ENCODE measurements at regions of chr3 and their contacts with region 1.

Region 1: GRCh38 chr3:155110976-155111901 is 31.1 kb downstream of the MME start:
- DNase-seq: peak; percentile 88
- H3K4me3 ChIP-seq: peak overlapping the region; percentile 63
- H3K27ac ChIP-seq: peak overlapping the region; percentile 98
- H3K4me1 ChIP-seq: peaks cover 96% of the 10 kb centered on the region
- CTCF ChIP-seq: no peak

Region 2: GRCh38 chr3:155093261-155093660 is 18.0 kb before region 1 on chr3:
- CTCF ChIA-PET with region 1: no interaction called
- POLR2A ChIA-PET with region 1: interaction called, 13 read pairs
- intact Hi-C with region 1: no loop called
- DNase-seq: peak; percentile 79
- H3K4me3 ChIP-seq: peak overlapping the region; percentile 2
- H3K27ac ChIP-seq: peak overlapping the region; percentile 76
- H3K4me1 ChIP-seq: peaks cover 68% of the 10 kb centered on the region
- CTCF ChIP-seq: no peak

Region 3: DNA sequence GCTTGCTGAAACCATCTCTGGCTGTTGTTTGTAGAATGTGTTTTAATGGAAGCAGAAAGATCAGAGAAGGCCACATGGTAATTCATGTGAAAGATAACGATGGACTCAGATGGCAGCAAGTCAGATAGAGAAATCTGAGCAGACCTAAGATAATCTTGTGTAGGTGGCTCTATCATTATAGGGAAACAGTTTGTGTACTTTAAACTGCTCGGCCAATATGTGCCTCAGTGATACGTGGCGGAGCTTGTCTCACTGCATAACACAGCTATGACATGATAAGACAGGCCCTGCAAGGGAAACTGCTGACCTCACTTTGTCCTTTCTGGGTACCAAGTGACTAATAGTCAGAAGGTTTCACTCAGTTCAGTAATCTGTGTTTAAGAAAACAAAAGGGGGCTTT is 19.9 kb after region 1 on chr3:
- CTCF ChIA-PET with region 1: no interaction called
- POLR2A ChIA-PET with region 1: interaction called, 11 read pairs
- intact Hi-C with region 1: no loop called
- DNase-seq: no peak
- H3K4me3 ChIP-seq: no peak overlapping the region
- H3K27ac ChIP-seq: no peak overlapping the region
- H3K4me1 ChIP-seq: peaks cover 40% of the 10 kb centered on the region
- CTCF ChIP-seq: no peak

Region 4: GRCh38 chr3:155870133-155870944 is 759.1 kb after region 1 on chr3 and contains the start of gene GMPS:
- CTCF ChIA-PET with region 1: no interaction called
- POLR2A ChIA-PET with region 1: no interaction called
- intact Hi-C with region 1: loop called (anchors 5 kb)
- DNase-seq: peak; percentile 95
- H3K4me3 ChIP-seq: peak within 1 kb of the TSS; percentile 88
- H3K27ac ChIP-seq: peak within 1 kb of the TSS; percentile 81
- H3K4me1 ChIP-seq: peaks cover 23% of the 10 kb centered on the region
- CTCF ChIP-seq: peak; percentile 37; the same call in 1 of the 2 replicates
- total RNA-seq, gene GMPS: 32.3 and 37.6 TPM in 2 replicates